A673 (cell line): ENCODE measurements at regions of chr12 and their contacts with region 1.

Region 1: GRCh38 chr12:2944401-2945047 is 14.7 kb upstream of the TEAD4 start:
- DNase-seq: peak; percentile 63
- H3K4me3 ChIP-seq: peak overlapping the region; percentile 23
- H3K27ac ChIP-seq: no peak overlapping the region
- H3K4me1 ChIP-seq: no peaks in the 10 kb centered on the region
- H3K27me3 ChIP-seq: no peaks in the 10 kb centered on the region
- CTCF ChIP-seq: peak; percentile 96

Region 2: GRCh38 chr12:2845280-2845679 is 99.2 kb before region 1 on chr12:
- CTCF ChIA-PET with region 1: interaction called, 4 read pairs
- POLR2A ChIA-PET with region 1: no interaction called
- intact Hi-C with region 1: loop called (anchors 2 kb)
- DNase-seq: peak; percentile 81
- H3K4me3 ChIP-seq: no peak overlapping the region
- H3K27ac ChIP-seq: peak overlapping the region; percentile 40
- H3K4me1 ChIP-seq: peaks cover 25% of the 10 kb centered on the region
- H3K27me3 ChIP-seq: no peaks in the 10 kb centered on the region
- CTCF ChIP-seq: no peak

Region 3: GRCh38 chr12:2853626-2854025 is 90.9 kb before region 1 on chr12:
- CTCF ChIA-PET with region 1: interaction called, 14 read pairs
- POLR2A ChIA-PET with region 1: no interaction called
- intact Hi-C with region 1: no loop called
- DNase-seq: peak; percentile 91
- H3K4me3 ChIP-seq: no peak overlapping the region
- H3K27ac ChIP-seq: no peak overlapping the region
- H3K4me1 ChIP-seq: no peaks in the 10 kb centered on the region
- H3K27me3 ChIP-seq: no peaks in the 10 kb centered on the region
- CTCF ChIP-seq: peak; percentile 91

Region 4: GRCh38 chr12:2884810-2885209 is 59.7 kb before region 1 on chr12:
- CTCF ChIA-PET with region 1: interaction called, 24 read pairs
- POLR2A ChIA-PET with region 1: no interaction called
- intact Hi-C with region 1: loop called (anchors 1 kb)
- DNase-seq: no peak
- H3K4me3 ChIP-seq: no peak overlapping the region
- H3K27ac ChIP-seq: peak overlapping the region; percentile 20
- H3K4me1 ChIP-seq: no peaks in the 10 kb centered on the region
- H3K27me3 ChIP-seq: no peaks in the 10 kb centered on the region
- CTCF ChIP-seq: no peak

Region 5: GRCh38 chr12:3381059-3382047 is 436.8 kb after region 1 on chr12:
- CTCF ChIA-PET with region 1: no interaction called
- POLR2A ChIA-PET with region 1: no interaction called
- intact Hi-C with region 1: no loop called
- DNase-seq: peak; percentile 52
- H3K4me3 ChIP-seq: no peak overlapping the region
- H3K27ac ChIP-seq: no peak overlapping the region
- H3K4me1 ChIP-seq: peaks cover 4% of the 10 kb centered on the region
- H3K27me3 ChIP-seq: no peaks in the 10 kb centered on the region
- CTCF ChIP-seq: no peak